ENCODE measurements at regions of chr1 and their contacts with region 1.

Region 1: GRCh38 chr1:226535666-226536065 is 12.9 kb upstream of the STUM start:
- DNase-seq: no peak
- H3K4me3 ChIP-seq: no peak overlapping the region
- H3K27ac ChIP-seq: no peak overlapping the region
- H3K4me1 ChIP-seq: no peaks in the 10 kb centered on the region
- H3K27me3 ChIP-seq: no peaks in the 10 kb centered on the region
- CTCF ChIP-seq: no peak
- POLR2A ChIP-seq: no peak

Region 2: GRCh38 chr1:226274138-226274537 is 261.5 kb before region 1 on chr1:
- intact Hi-C with region 1: no loop called
- DNase-seq: peak in 1 of 7 donors; percentile 31
- H3K4me3 ChIP-seq: no peak overlapping the region
- H3K27ac ChIP-seq: no peak overlapping the region
- H3K4me1 ChIP-seq: no peaks in the 10 kb centered on the region
- H3K27me3 ChIP-seq: no peaks in the 10 kb centered on the region
- CTCF ChIP-seq: no peak
- POLR2A ChIP-seq: no peak

Region 3: GRCh38 chr1:226370144-226370923 is 165.3 kb before region 1 on chr1:
- intact Hi-C with region 1: no loop called
- DNase-seq: no peak
- H3K4me3 ChIP-seq: no peak overlapping the region
- H3K27ac ChIP-seq: no peak overlapping the region
- H3K4me1 ChIP-seq: no peaks in the 10 kb centered on the region
- H3K27me3 ChIP-seq: no peaks in the 10 kb centered on the region
- CTCF ChIP-seq: no peak
- POLR2A ChIP-seq: no peak

Region 4: GRCh38 chr1:226523646-226524406 is 11.8 kb before region 1 on chr1:
- intact Hi-C with region 1: loop called in 1 of 2 experiments (anchors 2 kb)
- DNase-seq: peak in 1 of 7 donors; percentile 39
- H3K4me3 ChIP-seq: no peak overlapping the region
- H3K27ac ChIP-seq: no peak overlapping the region
- H3K4me1 ChIP-seq: peaks cover 0 to 3% of the 10 kb centered on the region in 2 donors
- H3K27me3 ChIP-seq: no peaks in the 10 kb centered on the region
- CTCF ChIP-seq: no peak
- POLR2A ChIP-seq: no peak

Region 5: GRCh38 chr1:226584164-226584563 is 48.5 kb after region 1 on chr1:
- intact Hi-C with region 1: no loop called
- DNase-seq: no peak
- H3K4me3 ChIP-seq: no peak overlapping the region
- H3K27ac ChIP-seq: no peak overlapping the region
- H3K4me1 ChIP-seq: peaks cover 0 to 6% of the 10 kb centered on the region in 2 donors
- H3K27me3 ChIP-seq: no peaks in the 10 kb centered on the region
- CTCF ChIP-seq: no peak
- POLR2A ChIP-seq: no peak

Measured in adrenal gland (tissue), 19 donors.